Motor neuron (in vitro differentiated cells): ENCODE measurements at regions of chr12 and their contacts with region 1.

Region 1: DNA sequence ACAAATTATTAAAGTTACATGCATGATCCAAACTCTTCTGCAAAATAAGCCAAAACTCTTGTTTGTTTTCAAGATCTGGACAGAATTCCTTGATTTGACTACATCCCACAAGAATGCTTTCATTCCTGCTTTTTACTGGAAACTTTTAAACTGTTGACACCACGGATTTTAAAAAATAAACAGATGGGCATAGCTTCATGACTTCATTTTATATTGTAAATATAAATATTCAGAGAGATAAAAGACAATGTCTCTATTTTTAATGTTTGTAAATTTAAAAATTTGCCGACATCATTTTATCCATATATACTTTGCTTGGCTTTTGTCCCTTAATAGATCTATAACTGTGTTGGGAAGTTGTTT is 134.3 kb upstream of the DCN start:
- ATAC-seq: no peak
- H3K4me3 ChIP-seq: no peak overlapping the region
- H3K27ac ChIP-seq: no peak overlapping the region
- H3K4me1 ChIP-seq: no peaks in the 10 kb centered on the region

Region 2: GRCh38 chr12:90959538-90960139 is 357.2 kb before region 1 on chr12:
- in situ Hi-C with region 1: loop called in 1 of 9 experiments (anchors 25 kb)
- ATAC-seq: peak in 6 of 8 experiments; percentile 47 to 77 (median 63)
- H3K4me3 ChIP-seq: no peak overlapping the region
- H3K27ac ChIP-seq: no peak overlapping the region
- H3K4me1 ChIP-seq: no peaks in the 10 kb centered on the region

Region 3: DNA sequence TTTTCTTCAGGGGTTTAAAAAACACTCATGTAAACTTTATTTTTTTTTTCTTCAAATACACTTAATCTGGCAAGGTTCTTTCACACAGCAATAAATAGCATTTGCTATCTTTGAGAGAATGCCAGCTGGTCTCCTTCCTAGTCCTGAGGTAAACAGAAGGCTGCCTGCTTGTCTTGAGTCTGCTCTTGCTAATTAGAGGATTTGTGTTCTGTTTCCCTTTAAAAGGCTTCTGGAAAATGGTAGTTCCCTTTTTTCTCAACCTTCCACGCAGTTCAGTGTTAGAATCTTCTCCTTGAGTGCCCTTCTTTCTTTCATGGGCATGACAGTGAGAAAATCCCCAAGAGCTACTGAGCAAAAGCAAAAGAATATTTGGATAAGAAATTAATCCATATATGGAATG is 42.0 kb before region 1 on chr12:
- in situ Hi-C with region 1: no loop called
- ATAC-seq: no peak
- H3K4me3 ChIP-seq: no peak overlapping the region
- H3K27ac ChIP-seq: no peak overlapping the region
- H3K4me1 ChIP-seq: no peaks in the 10 kb centered on the region